Stomach (tissue), 19 donors: ENCODE measurements at regions of chr3 and their contacts with region 1.

Region 1: DNA sequence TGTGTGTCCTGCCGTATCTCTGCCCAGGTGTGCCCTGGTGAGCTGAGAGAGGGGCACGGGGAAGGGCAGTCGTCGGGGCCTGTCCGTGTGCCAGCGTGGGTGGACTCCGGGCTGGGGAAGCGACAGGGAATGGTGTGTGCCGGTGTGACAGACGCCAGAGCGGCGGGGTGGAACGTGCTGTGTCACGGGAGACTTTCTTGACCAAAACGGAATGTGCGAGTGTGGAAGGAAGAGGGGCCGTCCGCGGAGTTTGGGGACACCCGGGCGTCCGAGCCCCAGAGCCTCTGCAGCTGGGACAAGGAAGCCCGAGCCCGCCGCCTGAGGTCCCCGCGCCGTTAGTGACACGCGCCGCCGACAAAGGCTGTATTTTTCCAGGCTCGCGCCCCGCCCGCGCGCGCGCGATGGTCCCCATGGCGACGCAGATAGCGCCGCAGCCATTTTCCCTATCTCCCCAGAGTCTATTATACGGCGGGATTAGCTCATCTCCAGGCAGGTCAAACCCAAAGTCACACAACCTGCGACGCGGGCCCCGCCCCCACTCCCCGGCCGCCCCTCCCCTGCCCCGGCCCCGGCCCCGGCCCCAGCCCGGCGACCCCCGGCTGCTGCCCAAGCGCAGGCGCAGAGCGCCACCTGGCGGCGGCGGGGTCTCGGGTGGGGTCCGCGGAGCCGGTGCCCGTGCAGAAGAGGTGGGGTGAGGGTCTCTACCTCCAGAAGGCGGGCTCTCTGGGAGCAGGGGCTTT is 4.6 kb upstream of the GATA2 start:
- DNase-seq: peak; percentile 75 to 90
- H3K4me3 ChIP-seq: peak overlapping the region; percentile 48 to 67 (median 58)
- H3K27ac ChIP-seq: no peak overlapping the region
- H3K4me1 ChIP-seq: peaks cover 18 to 34% (median 24%) of the 10 kb centered on the region in 4 donors
- H3K27me3 ChIP-seq: peaks cover 19 to 99% (median 75%) of the 10 kb centered on the region in 3 donors
- CTCF ChIP-seq: peak in 5 of 7 experiments; percentile 39 to 90 (median 67)
- EP300 ChIP-seq: no peak
- POLR2A ChIP-seq: no peak

Region 2: DNA sequence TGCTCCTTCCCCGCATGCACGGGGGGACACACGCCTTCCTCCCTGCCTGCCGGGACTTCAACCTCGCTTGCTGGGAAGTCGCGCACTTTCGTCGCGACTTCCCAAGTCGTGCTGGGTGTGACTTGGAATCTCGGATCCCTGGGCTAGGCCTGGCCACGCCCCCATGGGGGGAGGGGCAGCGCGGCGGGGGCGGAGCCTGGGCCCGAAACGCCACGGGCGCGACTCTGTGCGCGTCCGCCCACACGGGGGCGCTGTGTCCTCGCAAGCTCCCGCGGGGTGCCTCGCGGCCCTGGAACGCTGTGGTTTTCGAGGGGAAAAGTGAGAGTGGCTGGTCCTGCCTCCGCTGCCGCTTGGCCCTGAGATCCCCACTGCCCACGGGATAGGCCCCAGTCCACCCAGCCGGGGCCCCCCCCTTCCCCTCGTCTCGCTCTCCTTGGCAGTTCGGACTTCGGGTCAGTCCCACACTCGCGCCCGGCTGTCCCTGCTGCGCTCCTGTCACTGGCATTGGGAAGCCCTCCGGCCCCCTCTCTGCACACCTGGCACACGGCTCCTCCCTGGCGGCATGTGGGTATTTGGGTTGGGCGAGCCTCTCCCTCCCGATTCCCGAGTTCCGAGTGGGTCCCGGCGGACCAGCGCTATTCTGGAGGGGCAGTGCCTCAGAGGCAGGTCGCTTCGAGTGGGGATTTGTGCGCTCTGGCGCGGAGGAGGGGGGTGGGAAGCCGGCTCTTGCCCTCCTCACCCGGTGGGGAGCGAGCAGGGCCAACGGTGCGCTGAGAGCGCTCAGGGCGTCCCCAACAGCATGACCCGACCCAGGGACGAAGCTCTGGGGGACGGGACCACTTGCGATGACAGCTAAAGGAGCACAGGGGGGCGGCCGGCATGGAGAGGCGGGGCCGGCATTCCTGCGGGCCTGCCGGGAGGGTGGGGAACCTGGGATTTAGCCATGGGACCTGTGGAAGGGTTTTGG is 421.8 kb before region 1 on chr3:
- intact Hi-C with region 1: loop called (anchors 10 kb)
- DNase-seq: peak; percentile 93 to 96
- H3K4me3 ChIP-seq: peak overlapping the region; percentile 46 to 68 (median 51)
- H3K27ac ChIP-seq: peak overlapping the region; percentile 59 to 79 (median 70)
- H3K4me1 ChIP-seq: peaks cover 18 to 52% (median 51%) of the 10 kb centered on the region in 4 donors
- H3K27me3 ChIP-seq: no peaks in the 10 kb centered on the region
- CTCF ChIP-seq: peak in 5 of 7 experiments; percentile 87 to 97 (median 93)
- EP300 ChIP-seq: no peak
- POLR2A ChIP-seq: no peak